ENCODE measurements at regions of chr5 and their contacts with region 1.

Region 1: DNA sequence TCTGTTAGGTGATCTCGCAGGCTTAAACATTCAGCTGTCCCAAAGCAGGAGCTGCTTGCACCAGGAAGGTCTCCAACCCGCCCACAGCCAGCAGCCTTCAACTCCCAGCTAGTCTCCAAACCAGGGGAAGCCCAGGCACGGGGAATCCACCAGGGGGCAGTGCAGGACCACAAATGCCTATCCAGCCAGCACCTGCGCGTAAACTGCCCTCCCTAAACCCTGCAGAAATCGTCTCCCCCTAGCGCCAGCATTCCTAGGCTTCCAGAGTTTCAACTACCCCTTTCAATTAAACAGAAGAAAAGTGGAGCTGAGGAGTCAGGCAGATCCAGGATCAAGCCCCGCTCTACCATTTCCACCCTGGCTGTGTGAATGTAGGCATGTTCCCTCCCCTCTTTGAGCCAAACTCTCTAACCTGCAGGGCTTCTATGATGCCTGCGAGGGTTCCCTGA is 72.0 kb downstream of the HRH2 start:
- DNase-seq: peak; percentile 92 to 97
- H3K4me3 ChIP-seq: no peak overlapping the region
- H3K4me3 Mint-ChIP-seq: peak overlapping the region; percentile 52
- H3K27ac Mint-ChIP-seq: no peak overlapping the region
- H3K4me1 ChIP-seq: no peaks in the 10 kb centered on the region
- H3K4me1 Mint-ChIP-seq: peaks cover 15% of the 10 kb centered on the region
- H3K27me3 ChIP-seq: no peaks in the 10 kb centered on the region
- H3K27me3 Mint-ChIP-seq: peaks cover 3% of the 10 kb centered on the region
- CTCF ChIP-seq: peak; percentile 97 to 99

Region 2: DNA sequence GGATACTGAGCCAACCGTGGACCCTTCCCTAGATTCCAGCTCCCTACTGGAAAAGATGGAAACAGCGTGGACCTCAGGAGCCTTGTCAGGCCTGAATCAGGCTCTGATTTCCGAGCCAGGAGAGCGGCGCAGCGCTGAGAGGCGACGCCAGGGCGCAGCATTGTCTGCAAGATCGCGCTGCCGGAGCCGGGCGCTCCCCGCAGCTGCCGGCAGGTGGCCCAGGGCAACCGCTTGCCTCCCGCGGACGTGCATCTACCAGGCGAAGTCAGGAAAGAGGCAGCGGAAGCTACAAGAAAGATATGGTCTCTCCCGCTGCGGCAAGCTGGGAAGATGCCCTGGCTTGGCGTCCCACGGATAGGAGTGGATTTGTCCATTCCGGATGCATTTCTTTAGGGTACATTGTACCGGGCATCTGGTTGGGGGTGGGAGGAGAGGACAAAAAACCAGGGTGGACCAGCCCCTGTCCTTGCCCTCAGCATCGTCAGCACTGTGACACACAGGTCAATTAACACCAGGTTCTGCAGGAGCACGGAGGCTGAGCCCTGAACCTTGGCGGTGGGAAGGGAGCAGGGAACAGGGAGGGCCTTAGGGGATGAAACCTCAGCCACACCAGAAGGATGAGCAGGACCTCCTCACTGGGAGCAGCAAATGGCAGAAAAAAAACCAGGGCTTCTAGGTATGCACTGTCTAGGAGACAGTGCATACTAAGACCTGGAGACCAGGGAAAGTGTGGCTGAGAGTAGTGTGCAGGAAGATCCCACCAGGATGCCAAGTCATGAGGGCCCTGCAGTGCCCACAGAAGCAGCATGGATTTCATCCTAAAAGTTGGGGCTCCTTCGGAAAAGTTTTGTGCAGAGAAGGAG is 195.6 kb before region 1 on chr5:
- CTCF ChIA-PET with region 1: interaction called, 49 read pairs
- POLR2A ChIA-PET with region 1: interaction called, 3 read pairs
- intact Hi-C with region 1: no loop called
- DNase-seq: peak; percentile 75 to 88
- H3K4me3 ChIP-seq: no peak overlapping the region
- H3K4me3 Mint-ChIP-seq: no peak overlapping the region
- H3K27ac Mint-ChIP-seq: no peak overlapping the region
- H3K4me1 ChIP-seq: no peaks in the 10 kb centered on the region
- H3K4me1 Mint-ChIP-seq: no peaks in the 10 kb centered on the region
- H3K27me3 ChIP-seq: no peaks in the 10 kb centered on the region
- H3K27me3 Mint-ChIP-seq: no peaks in the 10 kb centered on the region
- CTCF ChIP-seq: peak; percentile 99 to 100

Region 3: GRCh38 chr5:175666216-175666615 is 63.6 kb before region 1 on chr5:
- CTCF ChIA-PET with region 1: no interaction called
- POLR2A ChIA-PET with region 1: no interaction called
- intact Hi-C with region 1: no loop called
- DNase-seq: no peak
- H3K4me3 ChIP-seq: no peak overlapping the region
- H3K4me3 Mint-ChIP-seq: no peak overlapping the region
- H3K27ac Mint-ChIP-seq: no peak overlapping the region
- H3K4me1 ChIP-seq: peaks cover 6% of the 10 kb centered on the region; the same call in 1 of the 2 replicates
- H3K4me1 Mint-ChIP-seq: peaks cover 5% of the 10 kb centered on the region
- H3K27me3 ChIP-seq: no peaks in the 10 kb centered on the region
- H3K27me3 Mint-ChIP-seq: peaks cover 3% of the 10 kb centered on the region
- CTCF ChIP-seq: no peak

Region 4: DNA sequence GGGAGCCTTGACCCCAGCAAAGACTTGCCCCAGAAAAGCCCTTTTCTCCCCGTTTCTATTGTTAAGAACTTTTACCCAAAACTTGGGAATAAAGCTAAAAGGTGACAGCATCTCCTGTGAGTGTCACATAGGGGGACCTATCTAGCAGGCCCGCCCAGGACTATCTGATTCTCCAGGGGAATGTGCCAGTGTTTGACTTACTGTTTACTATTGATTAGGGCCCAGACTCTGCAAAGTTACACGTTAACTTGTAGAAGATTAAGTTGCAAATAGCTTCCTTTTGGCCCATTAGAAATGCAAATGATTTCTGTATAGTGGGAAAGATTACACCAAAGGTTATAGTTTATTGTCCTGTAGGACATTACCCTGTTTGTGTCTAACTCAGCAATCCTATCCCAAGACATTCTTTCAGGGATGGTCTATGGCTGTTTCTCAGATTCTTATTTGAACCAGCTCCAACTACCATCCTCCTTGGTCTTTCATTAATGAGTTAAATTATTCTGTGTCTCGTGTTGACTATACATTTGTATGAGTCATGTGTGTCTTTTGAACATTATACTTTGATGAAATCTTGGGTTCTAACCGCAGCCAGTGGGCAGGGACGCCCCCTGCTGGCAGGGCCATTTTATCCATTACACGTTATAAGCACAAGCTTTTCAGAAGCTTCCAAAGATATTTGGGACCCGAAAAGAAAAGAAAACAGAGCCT is 11.3 kb before region 1 on chr5:
- CTCF ChIA-PET with region 1: interaction called, 31 read pairs
- POLR2A ChIA-PET with region 1: no interaction called
- intact Hi-C with region 1: no loop called
- DNase-seq: peak; percentile 51 to 74
- H3K4me3 ChIP-seq: no peak overlapping the region
- H3K4me3 Mint-ChIP-seq: no peak overlapping the region
- H3K27ac Mint-ChIP-seq: peak overlapping the region; percentile 24
- H3K4me1 ChIP-seq: peaks cover 9% of the 10 kb centered on the region; the same call in 1 of the 2 replicates
- H3K4me1 Mint-ChIP-seq: peaks cover 11% of the 10 kb centered on the region
- H3K27me3 ChIP-seq: no peaks in the 10 kb centered on the region
- H3K27me3 Mint-ChIP-seq: no peaks in the 10 kb centered on the region
- CTCF ChIP-seq: peak; percentile 88 to 93

Region 5: DNA sequence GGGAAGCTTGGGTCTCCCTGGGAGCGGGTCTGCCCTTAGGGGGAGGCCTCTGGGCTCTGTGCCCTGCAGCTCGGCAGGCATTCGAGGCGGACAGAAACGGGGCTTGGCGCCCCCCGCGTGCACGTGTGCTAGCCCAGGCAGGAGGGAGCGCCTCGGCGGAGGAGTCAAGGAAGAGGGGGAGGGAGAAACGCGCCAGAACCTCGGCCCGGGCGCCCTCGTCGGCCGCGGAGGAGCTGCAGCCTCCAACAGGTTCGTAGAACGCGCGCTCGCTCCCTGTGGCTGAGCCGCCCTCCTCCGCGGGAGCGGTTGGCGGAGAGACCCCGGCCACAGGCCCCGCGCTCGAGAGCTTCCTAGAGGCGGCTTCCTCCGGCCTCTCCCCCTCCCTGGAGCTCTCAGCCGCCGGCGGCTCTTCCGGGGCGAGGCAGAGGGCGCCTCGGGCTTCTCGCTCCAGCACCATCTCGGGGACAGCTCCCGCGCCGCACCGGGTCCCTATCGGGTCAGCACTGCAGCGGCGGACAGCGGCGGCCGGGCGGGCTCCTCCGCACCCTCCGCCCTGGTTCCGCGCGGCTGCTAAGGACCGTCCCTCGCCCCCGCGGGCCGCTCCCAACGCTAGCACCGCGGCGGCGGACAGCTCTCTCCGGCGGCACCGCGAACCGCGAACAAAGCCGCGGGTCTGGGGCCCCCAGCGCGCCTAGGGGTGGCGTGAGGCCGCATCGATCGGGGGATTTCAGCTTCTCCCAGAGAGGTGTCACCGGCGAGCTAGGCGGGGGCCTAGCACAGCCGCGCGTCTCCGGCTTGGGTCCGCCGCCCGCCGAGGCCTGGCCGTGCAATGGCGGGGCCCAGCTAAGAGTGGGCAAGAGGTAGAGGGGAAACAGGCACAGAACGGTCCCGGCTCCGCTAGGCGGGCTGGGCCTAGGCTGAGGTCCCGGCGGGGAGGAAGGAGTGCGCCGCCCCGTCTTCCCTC is 67.0 kb after region 1 on chr5:
- CTCF ChIA-PET with region 1: interaction called, 11 read pairs
- POLR2A ChIA-PET with region 1: no interaction called
- intact Hi-C with region 1: no loop called
- DNase-seq: peak; percentile 84 to 95
- H3K4me3 ChIP-seq: peak overlapping the region; percentile 29
- H3K4me3 Mint-ChIP-seq: peak overlapping the region; percentile 65
- H3K27ac Mint-ChIP-seq: no peak overlapping the region
- H3K4me1 ChIP-seq: peaks cover 10% of the 10 kb centered on the region; the same call in 1 of the 2 replicates
- H3K4me1 Mint-ChIP-seq: no peaks in the 10 kb centered on the region
- H3K27me3 ChIP-seq: peaks cover 1% of the 10 kb centered on the region; the same call in 1 of the 2 replicates
- H3K27me3 Mint-ChIP-seq: peaks cover 21% of the 10 kb centered on the region
- CTCF ChIP-seq: no peak

Region 6: GRCh38 chr5:176361437-176362232 is 631.8 kb after region 1 on chr5 and contains the start of gene KIAA1191:
- CTCF ChIA-PET with region 1: interaction called, 16 read pairs
- POLR2A ChIA-PET with region 1: no interaction called
- intact Hi-C with region 1: no loop called
- DNase-seq: peak; percentile 94 to 96
- H3K4me3 ChIP-seq: peak within 1 kb of the TSS; percentile 82
- H3K4me3 Mint-ChIP-seq: peak within 1 kb of the TSS; percentile 95
- H3K27ac Mint-ChIP-seq: peak within 1 kb of the TSS; percentile 93
- H3K4me1 ChIP-seq: no peaks in the 10 kb centered on the region; the same call in 1 of the 2 replicates
- H3K4me1 Mint-ChIP-seq: no peaks in the 10 kb centered on the region
- H3K27me3 ChIP-seq: no peaks in the 10 kb centered on the region
- H3K27me3 Mint-ChIP-seq: peaks cover 2% of the 10 kb centered on the region
- CTCF ChIP-seq: peak in 1 of 2 experiments; percentile 46
- total RNA-seq, gene KIAA1191: 119 and 123 TPM in 2 replicates

Region 7: DNA sequence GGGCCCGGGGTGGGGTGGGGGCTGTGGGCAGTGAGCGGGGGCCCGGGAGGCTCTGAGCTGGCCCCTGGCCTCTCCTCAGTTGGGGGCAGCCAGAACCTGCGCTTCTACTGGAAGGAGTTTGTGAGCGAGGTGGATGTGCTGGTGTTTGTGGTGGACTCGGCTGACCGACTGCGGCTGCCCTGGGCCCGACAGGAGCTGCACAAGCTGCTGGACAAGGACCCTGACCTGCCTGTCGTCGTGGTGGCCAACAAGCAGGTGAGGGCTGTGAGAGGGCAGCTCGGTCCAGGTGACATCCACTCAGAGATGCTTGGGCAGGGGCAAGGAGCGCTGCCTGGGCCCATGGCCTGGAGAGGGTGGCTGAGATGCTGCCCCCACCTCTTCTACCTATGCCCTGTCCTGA is 638.9 kb after region 1 on chr5:
- CTCF ChIA-PET with region 1: interaction called, 13 read pairs
- POLR2A ChIA-PET with region 1: no interaction called
- intact Hi-C with region 1: no loop called
- DNase-seq: no peak
- H3K4me3 ChIP-seq: no peak overlapping the region
- H3K4me3 Mint-ChIP-seq: no peak overlapping the region
- H3K27ac Mint-ChIP-seq: no peak overlapping the region
- H3K4me1 ChIP-seq: no peaks in the 10 kb centered on the region; the same call in 1 of the 2 replicates
- H3K4me1 Mint-ChIP-seq: no peaks in the 10 kb centered on the region
- H3K27me3 ChIP-seq: no peaks in the 10 kb centered on the region
- H3K27me3 Mint-ChIP-seq: no peaks in the 10 kb centered on the region
- CTCF ChIP-seq: no peak

Measured in Caco-2 (cell line).